Dorsolateral prefrontal cortex (tissue), 120 donors: ENCODE measurements at regions of chr12 and their contacts with region 1.

Region 1: GRCh38 chr12:108457006-108457733 is 57.9 kb upstream of the FICD start:
- DNase-seq: peak in 2 of 10 donors; percentile 38 to 41
- H3K4me3 ChIP-seq: no peak overlapping the region
- H3K27ac ChIP-seq: peak overlapping the region in 32 of 59 donors; percentile 0 to 77 (median 44)
- H3K27me3 ChIP-seq: peaks cover 0 to 8% (median 0%) of the 10 kb centered on the region in 45 donors
- CTCF ChIP-seq: peak; percentile 36 to 78 (median 66)

Region 2: DNA sequence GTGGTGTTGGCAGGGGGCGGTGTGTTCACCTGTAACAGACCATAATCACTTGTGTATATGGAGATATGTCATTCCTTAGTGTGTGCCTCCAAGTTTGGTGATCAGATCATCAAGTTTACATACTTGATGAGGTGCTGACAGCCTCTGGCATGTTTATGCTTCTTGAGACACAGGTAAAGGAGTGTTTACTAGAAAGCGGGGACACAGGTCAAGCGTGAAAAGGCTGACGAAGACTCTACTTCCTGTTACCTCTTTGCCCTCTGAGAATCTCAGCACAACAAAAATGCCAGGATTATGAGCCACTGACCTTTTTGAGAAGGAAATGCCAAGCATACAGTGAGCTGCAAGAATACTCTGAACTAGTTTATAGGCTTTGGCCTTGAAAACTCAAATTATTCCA is 725.8 kb before region 1 on chr12:
- intact Hi-C with region 1: no loop called
- DNase-seq: no peak
- H3K4me3 ChIP-seq: no peak overlapping the region
- H3K27ac ChIP-seq: peak overlapping the region in 3 of 59 donors; percentile 3 to 34 (median 5)
- H3K27me3 ChIP-seq: no peaks in the 10 kb centered on the region
- CTCF ChIP-seq: no peak

Region 3: GRCh38 chr12:107917912-107918800 is 539.0 kb before region 1 on chr12:
- intact Hi-C with region 1: loop called in 1 of 2 experiments (anchors 5 kb)
- DNase-seq: peak in 2 of 10 donors; percentile 22 to 34
- H3K4me3 ChIP-seq: no peak overlapping the region
- H3K27ac ChIP-seq: no peak overlapping the region
- H3K27me3 ChIP-seq: peaks cover 0 to 36% (median 4%) of the 10 kb centered on the region in 45 donors
- CTCF ChIP-seq: peak in 55 of 56 donors; percentile 27 to 69 (median 55)

Region 4: DNA sequence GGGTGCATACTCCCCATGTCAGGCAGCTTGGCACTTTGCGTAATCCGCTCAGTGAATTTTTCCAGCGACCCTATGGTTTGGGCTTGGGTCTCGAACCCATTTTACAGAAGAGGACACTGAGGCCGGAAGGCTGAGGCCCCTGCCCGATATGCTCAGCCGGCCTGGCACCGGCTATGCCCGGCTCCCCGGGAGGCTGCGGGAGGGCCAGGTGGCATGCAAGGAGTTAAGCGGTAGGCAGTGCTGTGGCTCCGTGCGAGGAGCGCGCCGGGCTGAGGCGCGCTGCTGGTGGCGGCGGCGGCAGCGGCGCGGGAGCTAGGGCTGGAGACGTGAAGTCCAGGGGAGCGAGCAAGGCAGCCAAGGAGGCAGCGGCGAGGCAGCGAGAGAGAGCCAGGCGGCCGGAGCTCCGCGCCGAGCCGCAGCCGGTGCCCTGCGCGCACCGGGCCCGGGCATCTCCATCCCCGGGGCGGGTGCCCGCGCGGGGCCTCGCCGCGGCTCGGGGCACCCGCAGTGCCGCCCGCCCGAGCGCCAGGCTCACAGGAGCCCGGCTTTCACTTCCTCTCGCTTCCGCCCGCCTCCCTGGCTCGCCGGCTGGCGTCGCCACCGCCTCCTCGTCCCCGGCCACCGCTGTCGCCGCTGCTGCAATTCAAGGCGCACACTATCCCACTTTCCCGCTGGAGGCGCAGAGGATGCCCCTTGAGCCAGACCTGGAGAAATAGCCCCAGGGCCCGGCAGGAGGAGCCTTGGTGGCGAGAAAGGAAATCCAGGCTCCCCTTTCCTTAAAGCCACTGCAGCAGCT is 328.0 kb before region 1 on chr12 and contains the start of gene WSCD2:
- intact Hi-C with region 1: loop called in 1 of 2 experiments (anchors 5 kb)
- DNase-seq: peak in 9 of 10 donors; percentile 33 to 78 (median 73)
- H3K4me3 ChIP-seq: peak within 1 kb of the TSS; percentile 24 to 76 (median 61)
- H3K27ac ChIP-seq: peak within 1 kb of the TSS in 55 of 59 donors; percentile 12 to 91 (median 72)
- H3K27me3 ChIP-seq: peaks cover 0 to 43% (median 5%) of the 10 kb centered on the region in 45 donors
- CTCF ChIP-seq: peak in 28 of 56 donors; percentile 5 to 46 (median 22)
- total RNA-seq, gene WSCD2: 15.4 to 68.3 (median 43.9) TPM

Region 5: DNA sequence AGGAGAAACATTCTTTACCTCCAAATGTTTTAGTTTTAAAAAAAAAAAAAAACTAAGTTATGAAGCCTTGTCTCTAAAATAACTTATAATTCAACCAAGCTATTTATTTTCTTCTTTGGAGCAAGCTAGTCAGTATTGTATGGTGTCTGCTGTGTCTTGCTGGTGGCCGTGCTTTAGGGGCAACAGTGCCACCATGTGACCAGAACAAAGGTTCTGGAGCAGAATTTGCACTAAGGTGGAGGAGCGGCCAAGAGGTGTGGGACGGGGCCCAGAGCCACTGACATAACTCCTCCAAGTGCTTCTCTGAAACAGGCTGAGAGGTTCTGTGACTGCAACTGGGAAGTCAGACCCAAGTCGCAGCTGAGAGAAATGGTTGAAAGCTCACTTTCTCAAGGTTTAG is 62.4 kb after region 1 on chr12:
- intact Hi-C with region 1: no loop called
- DNase-seq: peak in 1 of 10 donors; percentile 49
- H3K4me3 ChIP-seq: no peak overlapping the region
- H3K27ac ChIP-seq: peak overlapping the region in 5 of 59 donors; percentile 16 to 38 (median 24)
- H3K27me3 ChIP-seq: no peaks in the 10 kb centered on the region
- CTCF ChIP-seq: peak in 9 of 56 donors; percentile 6 to 34 (median 22)

Region 6: GRCh38 chr12:108562348-108563135 is 105.4 kb after region 1 on chr12 and contains the start of gene ISCU:
- intact Hi-C with region 1: no loop called
- DNase-seq: peak; percentile 91 to 99 (median 96)
- H3K4me3 ChIP-seq: peak within 1 kb of the TSS; percentile 69 to 100 (median 97)
- H3K27ac ChIP-seq: peak within 1 kb of the TSS; percentile 63 to 99 (median 96)
- H3K27me3 ChIP-seq: no peaks in the 10 kb centered on the region
- CTCF ChIP-seq: peak in 30 of 56 donors; percentile 9 to 60 (median 30)
- total RNA-seq, gene ISCU: 120 to 322 (median 236) TPM